CD8-positive, alpha-beta memory T cell (primary cell): ENCODE measurements at regions of chr16 and their contacts with region 1.

Region 1: GRCh38 chr16:75519881-75520280 is 16.0 kb downstream of the CHST5 start:
- DNase-seq: no peak
- H3K4me3 ChIP-seq: no peak overlapping the region
- H3K4me3 Mint-ChIP-seq: no peak overlapping the region
- H3K27ac ChIP-seq: no peak overlapping the region
- H3K27ac Mint-ChIP-seq: no peak overlapping the region
- H3K4me1 ChIP-seq: peaks cover 12% of the 10 kb centered on the region
- H3K4me1 Mint-ChIP-seq: peaks cover 8 to 22% (median 21%) of the 10 kb centered on the region in 3 donors
- H3K27me3 ChIP-seq: no peaks in the 10 kb centered on the region
- H3K27me3 Mint-ChIP-seq: no peaks in the 10 kb centered on the region

Region 2: GRCh38 chr16:75432828-75433731 is 86.8 kb before region 1 on chr16 and contains the start of gene CFDP1:
- CTCF ChIA-PET with region 1: interaction called, 13 read pairs
- POLR2A ChIA-PET with region 1: no interaction called
- DNase-seq: peak; percentile 94 to 98 (median 96)
- H3K4me3 ChIP-seq: peak within 1 kb of the TSS; percentile 93
- H3K4me3 Mint-ChIP-seq: peak within 1 kb of the TSS; percentile 86 to 95 (median 93)
- H3K27ac ChIP-seq: peak within 1 kb of the TSS; percentile 98
- H3K27ac Mint-ChIP-seq: peak within 1 kb of the TSS; percentile 94 to 99 (median 97)
- H3K4me1 ChIP-seq: peaks cover 12% of the 10 kb centered on the region
- H3K4me1 Mint-ChIP-seq: peaks cover 25 to 46% (median 39%) of the 10 kb centered on the region in 3 donors
- H3K27me3 ChIP-seq: no peaks in the 10 kb centered on the region
- H3K27me3 Mint-ChIP-seq: peaks cover 0 to 2% of the 10 kb centered on the region in 2 donors
- total RNA-seq, gene CFDP1: 34.2 to 39.1 TPM

Region 3: GRCh38 chr16:75471723-75472633 is 47.9 kb before region 1 on chr16:
- CTCF ChIA-PET with region 1: interaction called, 18 read pairs
- POLR2A ChIA-PET with region 1: no interaction called
- DNase-seq: peak; percentile 15 to 67 (median 36)
- H3K4me3 ChIP-seq: no peak overlapping the region
- H3K4me3 Mint-ChIP-seq: no peak overlapping the region
- H3K27ac ChIP-seq: no peak overlapping the region
- H3K27ac Mint-ChIP-seq: peak overlapping the region in 2 of 8 donors; percentile 29 to 55
- H3K4me1 ChIP-seq: no peaks in the 10 kb centered on the region
- H3K4me1 Mint-ChIP-seq: peaks cover 3 to 5% (median 4%) of the 10 kb centered on the region in 3 donors
- H3K27me3 ChIP-seq: no peaks in the 10 kb centered on the region
- H3K27me3 Mint-ChIP-seq: peaks cover under 1 to 5% of the 10 kb centered on the region in 2 donors

Region 4: GRCh38 chr16:75555707-75556430 is 36.0 kb after region 1 on chr16 and contains the start of gene TMEM231:
- CTCF ChIA-PET with region 1: interaction called, 25 read pairs
- POLR2A ChIA-PET with region 1: interaction called, 6 read pairs
- DNase-seq: peak; percentile 94 to 98 (median 96)
- H3K4me3 ChIP-seq: peak within 1 kb of the TSS; percentile 89
- H3K4me3 Mint-ChIP-seq: peak within 1 kb of the TSS; percentile 77 to 95 (median 87)
- H3K27ac ChIP-seq: peak within 1 kb of the TSS; percentile 58
- H3K27ac Mint-ChIP-seq: peak within 1 kb of the TSS; percentile 89 to 98 (median 94)
- H3K4me1 ChIP-seq: peaks cover 13% of the 10 kb centered on the region
- H3K4me1 Mint-ChIP-seq: peaks cover 7 to 17% (median 10%) of the 10 kb centered on the region in 3 donors
- H3K27me3 ChIP-seq: no peaks in the 10 kb centered on the region
- H3K27me3 Mint-ChIP-seq: no peaks in the 10 kb centered on the region
- total RNA-seq, gene TMEM231: 5.3 to 5.4 TPM

Region 5: GRCh38 chr16:75614066-75614897 is 94.4 kb after region 1 on chr16:
- CTCF ChIA-PET with region 1: interaction called, 42 read pairs
- POLR2A ChIA-PET with region 1: interaction called, 16 read pairs
- DNase-seq: no peak
- H3K4me3 ChIP-seq: no peak overlapping the region
- H3K4me3 Mint-ChIP-seq: peak overlapping the region in 4 of 7 donors; percentile 11 to 36 (median 14)
- H3K27ac ChIP-seq: peak overlapping the region; percentile 6
- H3K27ac Mint-ChIP-seq: peak overlapping the region; percentile 23 to 97 (median 72)
- H3K4me1 ChIP-seq: peaks cover 45% of the 10 kb centered on the region
- H3K4me1 Mint-ChIP-seq: peaks cover 45 to 75% (median 61%) of the 10 kb centered on the region in 3 donors
- H3K27me3 ChIP-seq: no peaks in the 10 kb centered on the region
- H3K27me3 Mint-ChIP-seq: peaks cover 0 to 2% of the 10 kb centered on the region in 2 donors

Region 6: GRCh38 chr16:75647492-75648264 is 127.8 kb after region 1 on chr16 and contains the starts of genes KARS1 and TERF2IP:
- CTCF ChIA-PET with region 1: interaction called, 36 read pairs
- POLR2A ChIA-PET with region 1: interaction called, 22 read pairs
- DNase-seq: peak; percentile 92 to 97 (median 95)
- H3K4me3 ChIP-seq: peak within 1 kb of the TSS; percentile 81
- H3K4me3 Mint-ChIP-seq: peak within 1 kb of the TSS; percentile 95 to 100 (median 99)
- H3K27ac ChIP-seq: peak within 1 kb of the TSS; percentile 97
- H3K27ac Mint-ChIP-seq: peak within 1 kb of the TSS; percentile 97 to 100 (median 99)
- H3K4me1 ChIP-seq: peaks cover 53% of the 10 kb centered on the region
- H3K4me1 Mint-ChIP-seq: peaks cover 61 to 73% (median 69%) of the 10 kb centered on the region in 3 donors
- H3K27me3 ChIP-seq: no peaks in the 10 kb centered on the region
- H3K27me3 Mint-ChIP-seq: peaks cover 0 to 2% of the 10 kb centered on the region in 2 donors
- total RNA-seq, gene KARS1: 291 to 307 TPM
- total RNA-seq, gene TERF2IP: 90.6 to 91.0 TPM